CD8-positive, alpha-beta T cell (primary cell): ENCODE measurements at regions of chr11 and their contacts with region 1.

Region 1: GRCh38 chr11:125592305-125593112 is at the start of gene STT3A:
- DNase-seq: peak; percentile 96 to 99 (median 98)
- ATAC-seq: peak; percentile 91
- H3K4me3 ChIP-seq: peak within 1 kb of the TSS; percentile 90 to 97
- H3K4me3 Mint-ChIP-seq: peak within 1 kb of the TSS; percentile 92
- H3K27ac ChIP-seq: peak within 1 kb of the TSS; percentile 88 to 96
- H3K27ac Mint-ChIP-seq: peak within 1 kb of the TSS; percentile 98
- H3K4me1 ChIP-seq: peaks cover 15% of the 10 kb centered on the region
- H3K4me1 Mint-ChIP-seq: peaks cover 43% of the 10 kb centered on the region
- H3K27me3 ChIP-seq: no peaks in the 10 kb centered on the region
- H3K27me3 Mint-ChIP-seq: no peaks in the 10 kb centered on the region
- CTCF ChIP-seq: no peak
- total RNA-seq, gene STT3A: 45.5 to 46.8 TPM

Region 2: GRCh38 chr11:124920870-124921609 is 671.5 kb before region 1 on chr11:
- CTCF ChIA-PET with region 1: no interaction called
- POLR2A ChIA-PET with region 1: no interaction called
- intact Hi-C with region 1: loop called in 1 of 2 experiments (anchors 1 kb)
- DNase-seq: peak; percentile 53 to 94 (median 81)
- ATAC-seq: peak; percentile 87
- H3K4me3 ChIP-seq: peak overlapping the region; percentile 25 to 42
- H3K4me3 Mint-ChIP-seq: peak overlapping the region; percentile 83
- H3K27ac ChIP-seq: peak overlapping the region in 1 of 2 experiments; percentile 42
- H3K27ac Mint-ChIP-seq: peak overlapping the region; percentile 77
- H3K4me1 ChIP-seq: peaks cover 28% of the 10 kb centered on the region
- H3K4me1 Mint-ChIP-seq: peaks cover 27% of the 10 kb centered on the region
- H3K27me3 ChIP-seq: no peaks in the 10 kb centered on the region
- H3K27me3 Mint-ChIP-seq: no peaks in the 10 kb centered on the region
- CTCF ChIP-seq: no peak

Region 3: DNA sequence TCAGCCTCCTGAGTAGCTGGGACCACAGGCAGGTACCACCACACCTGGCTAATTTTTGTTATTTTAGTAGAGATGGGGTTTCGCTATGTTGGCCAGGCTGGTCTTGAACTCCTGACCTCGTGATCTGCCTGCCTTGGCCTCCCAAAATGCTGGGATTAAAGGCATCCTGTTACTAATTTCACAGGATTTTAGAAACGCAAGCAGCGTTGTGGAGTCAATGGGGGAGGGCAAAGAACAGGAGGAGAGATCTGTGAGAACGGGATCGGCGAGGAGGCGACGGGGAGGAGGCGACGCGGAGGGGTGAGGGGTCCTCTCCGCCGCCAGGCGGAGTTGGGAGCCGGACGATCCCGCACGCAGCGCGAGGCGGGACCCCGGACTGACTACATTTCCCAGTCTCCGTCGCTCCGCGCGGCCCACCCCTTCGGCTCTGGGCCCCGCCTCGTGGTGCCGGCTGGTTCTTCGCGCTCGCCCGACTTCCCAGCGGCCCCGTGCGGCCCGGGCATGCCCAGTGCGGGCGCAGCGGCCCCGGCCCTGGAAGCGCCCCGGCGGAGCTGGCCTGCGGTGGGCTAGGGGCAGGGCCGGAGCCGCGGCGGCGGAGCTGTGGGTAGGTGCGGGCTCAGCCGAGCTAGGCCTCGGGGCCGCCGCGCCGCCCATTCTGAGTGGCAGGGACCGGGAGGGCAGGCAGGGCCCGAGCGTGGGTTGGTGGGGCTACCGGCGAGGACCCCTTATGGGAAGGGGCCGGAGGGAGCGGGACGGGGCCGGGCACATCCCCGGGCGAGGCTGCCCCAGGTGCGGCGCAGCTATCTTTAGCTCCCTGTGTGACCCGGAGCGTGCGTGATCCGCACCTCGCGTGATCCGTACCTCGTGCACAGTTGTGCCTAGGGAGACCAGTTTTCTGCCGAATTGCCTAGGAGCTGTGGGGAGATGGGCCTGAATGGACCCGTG is 23.3 kb before region 1 on chr11 and contains the start of gene EI24:
- CTCF ChIA-PET with region 1: interaction called, 5 read pairs
- POLR2A ChIA-PET with region 1: interaction called, 73 read pairs
- intact Hi-C with region 1: loop called (anchors 1 kb)
- DNase-seq: peak; percentile 71 to 95 (median 86)
- ATAC-seq: peak; percentile 95
- H3K4me3 ChIP-seq: peak within 1 kb of the TSS; percentile 81 to 92
- H3K4me3 Mint-ChIP-seq: peak within 1 kb of the TSS; percentile 93
- H3K27ac ChIP-seq: peak within 1 kb of the TSS; percentile 80 to 82
- H3K27ac Mint-ChIP-seq: peak within 1 kb of the TSS; percentile 95
- H3K4me1 ChIP-seq: peaks cover 16% of the 10 kb centered on the region
- H3K4me1 Mint-ChIP-seq: peaks cover 37% of the 10 kb centered on the region
- H3K27me3 ChIP-seq: no peaks in the 10 kb centered on the region
- H3K27me3 Mint-ChIP-seq: no peaks in the 10 kb centered on the region
- CTCF ChIP-seq: peak; percentile 60
- total RNA-seq, gene EI24: 20.5 to 22.4 TPM

Region 4: GRCh38 chr11:125902927-125903710 is 310.6 kb after region 1 on chr11 and contains the start of gene PUS3:
- CTCF ChIA-PET with region 1: no interaction called
- POLR2A ChIA-PET with region 1: no interaction called
- intact Hi-C with region 1: loop called in 1 of 2 experiments (anchors 1 kb)
- DNase-seq: peak; percentile 67 to 91 (median 87)
- ATAC-seq: peak; percentile 92
- H3K4me3 ChIP-seq: peak within 1 kb of the TSS; percentile 58 to 77
- H3K4me3 Mint-ChIP-seq: peak within 1 kb of the TSS; percentile 95
- H3K27ac ChIP-seq: peak within 1 kb of the TSS; percentile 48 to 67
- H3K27ac Mint-ChIP-seq: peak within 1 kb of the TSS; percentile 91
- H3K4me1 ChIP-seq: peaks cover 16% of the 10 kb centered on the region
- H3K4me1 Mint-ChIP-seq: peaks cover 41% of the 10 kb centered on the region
- H3K27me3 ChIP-seq: peaks cover 5 to 7% of the 10 kb centered on the region in 2 experiments
- H3K27me3 Mint-ChIP-seq: peaks cover 19% of the 10 kb centered on the region
- CTCF ChIP-seq: no peak
- total RNA-seq, gene PUS3: 4.5 to 5.2 TPM

Region 5: DNA sequence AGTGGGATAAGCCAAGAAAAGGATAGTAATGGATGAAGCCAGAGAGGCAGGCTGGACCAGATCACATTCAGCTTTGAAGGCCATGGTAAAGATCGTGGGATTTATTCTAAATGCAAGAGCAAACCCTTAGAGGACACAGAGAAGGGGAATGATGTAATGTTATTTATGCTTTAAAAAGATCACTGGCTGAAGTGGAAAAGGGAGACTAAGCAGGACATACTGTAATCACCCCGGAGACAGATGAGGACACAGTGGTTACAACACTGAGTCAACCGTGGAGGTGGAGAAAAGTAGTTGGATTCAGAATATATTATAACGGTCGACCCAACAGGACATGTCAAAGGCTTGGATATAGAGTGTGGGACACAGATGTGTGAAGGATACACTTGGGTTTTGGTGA is 431.6 kb after region 1 on chr11:
- CTCF ChIA-PET with region 1: no interaction called
- POLR2A ChIA-PET with region 1: no interaction called
- intact Hi-C with region 1: no loop called
- DNase-seq: no peak
- ATAC-seq: no peak
- H3K4me3 ChIP-seq: no peak overlapping the region
- H3K4me3 Mint-ChIP-seq: no peak overlapping the region
- H3K27ac ChIP-seq: no peak overlapping the region
- H3K27ac Mint-ChIP-seq: no peak overlapping the region
- H3K4me1 ChIP-seq: no peaks in the 10 kb centered on the region
- H3K4me1 Mint-ChIP-seq: no peaks in the 10 kb centered on the region
- H3K27me3 ChIP-seq: no peaks in the 10 kb centered on the region
- H3K27me3 Mint-ChIP-seq: no peaks in the 10 kb centered on the region
- CTCF ChIP-seq: no peak

Region 6: GRCh38 chr11:126669416-126669815 is 1076.9 kb after region 1 on chr11:
- CTCF ChIA-PET with region 1: no interaction called
- POLR2A ChIA-PET with region 1: no interaction called
- intact Hi-C with region 1: no loop called
- DNase-seq: no peak
- ATAC-seq: no peak
- H3K4me3 ChIP-seq: no peak overlapping the region
- H3K4me3 Mint-ChIP-seq: no peak overlapping the region
- H3K27ac ChIP-seq: no peak overlapping the region
- H3K27ac Mint-ChIP-seq: no peak overlapping the region
- H3K4me1 ChIP-seq: no peaks in the 10 kb centered on the region
- H3K4me1 Mint-ChIP-seq: no peaks in the 10 kb centered on the region
- H3K27me3 ChIP-seq: no peaks in the 10 kb centered on the region
- H3K27me3 Mint-ChIP-seq: peaks cover 18% of the 10 kb centered on the region
- CTCF ChIP-seq: no peak